Left ventricle myocardium superior (tissue), 1 donor: ENCODE measurements at regions of chr16 and their contacts with region 1.

Region 1: GRCh38 chr16:88527186-88527936 is 42.8 kb upstream of the ZC3H18 start:
- DNase-seq: peak; percentile 84
- ATAC-seq: peak; percentile 71

Region 2: GRCh38 chr16:88452482-88453216 is 74.7 kb before region 1 on chr16:
- intact Hi-C with region 1: loop called (anchors 5 kb)
- DNase-seq: peak; percentile 99
- ATAC-seq: peak; percentile 91